ENCODE measurements at regions of chr7 and their contacts with region 1.

Region 1: GRCh38 chr7:130021105-130021834 is 29.9 kb downstream of the ZC3HC1 start:
- DNase-seq: no peak
- H3K4me3 ChIP-seq: no peak overlapping the region
- H3K27ac ChIP-seq: no peak overlapping the region
- H3K4me1 ChIP-seq: peaks cover 13% of the 10 kb centered on the region
- H3K27me3 ChIP-seq: no peaks in the 10 kb centered on the region
- CTCF ChIP-seq: no peak

Region 2: DNA sequence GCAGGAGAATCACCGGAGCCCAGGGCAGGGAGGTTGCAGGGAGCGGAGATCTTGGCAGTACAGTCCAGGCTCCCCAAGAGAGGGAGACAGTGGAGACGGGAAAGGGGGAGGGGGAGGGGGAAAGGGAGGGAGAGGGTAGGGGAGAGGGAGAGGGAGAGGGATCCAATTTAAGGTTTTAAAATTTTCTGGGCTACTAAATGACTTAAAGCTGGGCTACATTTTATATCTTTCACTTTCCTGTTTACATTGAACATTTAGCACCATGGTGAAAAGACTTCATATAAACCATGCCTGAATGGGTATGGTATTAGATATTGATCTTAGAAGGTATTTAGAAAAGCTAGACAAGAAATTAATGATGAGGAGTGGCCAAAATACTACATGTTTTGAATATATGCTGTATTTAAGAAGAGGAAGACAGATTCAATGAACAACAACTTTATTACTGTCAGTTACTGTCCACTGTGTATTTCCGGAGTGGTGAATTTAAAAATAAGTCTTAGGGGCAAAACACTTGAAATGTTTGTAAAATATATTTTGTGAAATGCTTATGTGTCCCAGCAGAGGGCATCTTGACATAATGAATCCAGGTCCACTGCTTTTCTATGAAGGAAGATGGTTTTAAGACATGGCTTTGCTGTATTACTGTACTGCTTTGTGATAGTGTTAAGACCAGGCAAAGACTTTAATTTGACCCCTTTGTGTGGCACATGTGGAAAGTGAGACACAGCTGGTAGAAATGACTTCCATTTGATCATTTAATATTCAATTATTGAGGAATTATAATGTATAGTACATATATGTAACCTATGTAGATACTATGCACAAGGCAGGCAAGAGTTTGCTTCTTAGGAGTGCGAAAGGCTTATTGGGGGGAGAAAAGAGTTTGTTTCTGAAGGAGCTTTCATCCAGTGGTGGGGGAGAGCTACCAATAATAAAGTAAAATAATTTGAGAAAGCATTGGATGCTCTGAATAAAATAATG is 356.9 kb before region 1 on chr7:
- CTCF ChIA-PET with region 1: no interaction called
- POLR2A ChIA-PET with region 1: no interaction called
- intact Hi-C with region 1: loop called (anchors 5 kb)
- DNase-seq: peak; percentile 14 to 53
- H3K4me3 ChIP-seq: no peak overlapping the region
- H3K27ac ChIP-seq: peak overlapping the region; percentile 53
- H3K4me1 ChIP-seq: peaks cover 17% of the 10 kb centered on the region
- H3K27me3 ChIP-seq: no peaks in the 10 kb centered on the region
- CTCF ChIP-seq: peak; percentile 77

Region 3: DNA sequence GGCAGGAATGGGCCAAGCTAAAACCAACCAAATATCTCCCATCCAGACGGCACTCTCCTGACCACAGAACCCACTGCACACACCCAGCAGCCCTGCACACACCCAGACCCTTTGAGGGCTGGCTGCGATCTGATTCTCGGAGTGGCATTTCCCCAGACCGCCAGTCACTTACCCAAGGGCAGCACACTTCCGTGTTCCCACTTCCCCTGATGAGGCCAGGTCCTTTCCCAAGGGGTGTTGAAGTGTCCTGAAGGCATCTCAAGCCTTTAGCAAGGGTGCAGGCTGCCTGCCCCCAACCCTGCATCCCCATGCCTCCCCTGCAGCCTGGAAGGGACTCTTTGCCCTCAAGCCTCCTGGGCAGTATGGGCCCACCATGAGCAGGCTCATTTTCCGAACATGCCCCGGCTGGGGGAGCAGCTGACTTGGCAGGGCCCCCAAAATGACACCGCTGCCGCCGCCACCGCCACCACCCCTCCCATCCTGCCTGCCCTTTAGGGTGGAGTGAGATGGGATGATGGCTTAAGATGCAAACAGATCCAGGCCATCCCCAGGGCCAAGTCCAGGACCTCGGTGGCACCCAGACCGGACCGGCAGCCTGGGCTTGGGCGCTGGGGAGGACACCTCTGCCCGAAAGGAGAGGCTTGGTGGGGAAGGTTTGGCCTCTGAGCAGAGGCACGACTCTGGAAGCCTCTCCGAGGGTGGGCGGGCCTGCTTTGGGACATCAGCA is 249.9 kb before region 1 on chr7:
- CTCF ChIA-PET with region 1: no interaction called
- POLR2A ChIA-PET with region 1: no interaction called
- intact Hi-C with region 1: no loop called
- DNase-seq: peak in 1 of 2 experiments; percentile 29
- H3K4me3 ChIP-seq: no peak overlapping the region
- H3K27ac ChIP-seq: no peak overlapping the region
- H3K4me1 ChIP-seq: peaks cover 9% of the 10 kb centered on the region
- H3K27me3 ChIP-seq: no peaks in the 10 kb centered on the region
- CTCF ChIP-seq: no peak

Region 4: DNA sequence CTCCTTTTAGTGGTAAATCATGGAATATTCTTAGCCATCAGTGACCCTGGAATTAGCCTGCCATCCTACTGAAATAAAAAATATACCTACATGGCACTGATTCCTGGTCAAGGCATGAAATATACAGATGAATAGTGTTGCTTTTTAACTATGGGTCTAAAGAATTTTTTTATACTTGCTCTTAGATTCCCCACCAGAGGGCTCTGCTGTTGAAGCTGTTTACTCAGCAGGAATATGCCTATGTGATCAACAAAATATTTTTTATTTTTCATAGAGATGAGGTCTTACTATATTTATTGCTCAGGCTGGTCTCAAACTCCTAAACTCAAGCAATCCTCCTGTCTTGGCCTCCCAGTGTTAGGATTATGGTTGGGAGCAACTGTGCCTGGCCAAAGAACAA is 16.4 kb after region 1 on chr7:
- CTCF ChIA-PET with region 1: no interaction called
- POLR2A ChIA-PET with region 1: no interaction called
- intact Hi-C with region 1: no loop called
- DNase-seq: no peak
- H3K4me3 ChIP-seq: no peak overlapping the region
- H3K27ac ChIP-seq: no peak overlapping the region
- H3K4me1 ChIP-seq: no peaks in the 10 kb centered on the region
- H3K27me3 ChIP-seq: no peaks in the 10 kb centered on the region
- CTCF ChIP-seq: peak; percentile 68

Region 5: DNA sequence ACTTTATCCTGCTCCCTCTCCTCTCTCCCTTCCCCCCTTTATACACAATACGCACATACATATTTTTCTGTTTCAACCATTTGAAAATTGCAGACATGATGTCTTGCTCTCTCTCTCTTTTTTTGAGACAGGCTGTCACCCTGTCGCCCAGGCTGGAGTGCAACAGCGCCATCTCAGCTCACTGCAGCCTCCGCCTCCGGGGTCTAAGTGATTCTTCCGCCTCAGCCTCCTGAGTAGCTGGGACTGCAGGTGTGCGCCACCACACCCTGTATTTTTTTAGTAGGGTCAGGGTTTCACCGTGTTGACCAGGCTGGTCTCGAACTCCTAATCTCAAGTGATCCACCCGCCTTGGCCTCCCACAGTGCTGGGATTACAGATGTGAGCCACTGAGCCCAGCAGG is 87.5 kb after region 1 on chr7:
- CTCF ChIA-PET with region 1: interaction called, 13 read pairs
- POLR2A ChIA-PET with region 1: no interaction called
- intact Hi-C with region 1: no loop called
- DNase-seq: no peak
- H3K4me3 ChIP-seq: no peak overlapping the region
- H3K27ac ChIP-seq: no peak overlapping the region
- H3K4me1 ChIP-seq: peaks cover 6% of the 10 kb centered on the region
- H3K27me3 ChIP-seq: no peaks in the 10 kb centered on the region
- CTCF ChIP-seq: no peak

Region 6: GRCh38 chr7:130227883-130228575 is 206.8 kb after region 1 on chr7:
- CTCF ChIA-PET with region 1: no interaction called
- POLR2A ChIA-PET with region 1: no interaction called
- intact Hi-C with region 1: no loop called
- DNase-seq: no peak
- H3K4me3 ChIP-seq: no peak overlapping the region
- H3K27ac ChIP-seq: no peak overlapping the region
- H3K4me1 ChIP-seq: peaks cover 8% of the 10 kb centered on the region
- H3K27me3 ChIP-seq: no peaks in the 10 kb centered on the region
- CTCF ChIP-seq: no peak

Measured in PC-9 (cell line).